ENCODE measurements at regions of chr20 and their contacts with region 1.

Region 1: DNA sequence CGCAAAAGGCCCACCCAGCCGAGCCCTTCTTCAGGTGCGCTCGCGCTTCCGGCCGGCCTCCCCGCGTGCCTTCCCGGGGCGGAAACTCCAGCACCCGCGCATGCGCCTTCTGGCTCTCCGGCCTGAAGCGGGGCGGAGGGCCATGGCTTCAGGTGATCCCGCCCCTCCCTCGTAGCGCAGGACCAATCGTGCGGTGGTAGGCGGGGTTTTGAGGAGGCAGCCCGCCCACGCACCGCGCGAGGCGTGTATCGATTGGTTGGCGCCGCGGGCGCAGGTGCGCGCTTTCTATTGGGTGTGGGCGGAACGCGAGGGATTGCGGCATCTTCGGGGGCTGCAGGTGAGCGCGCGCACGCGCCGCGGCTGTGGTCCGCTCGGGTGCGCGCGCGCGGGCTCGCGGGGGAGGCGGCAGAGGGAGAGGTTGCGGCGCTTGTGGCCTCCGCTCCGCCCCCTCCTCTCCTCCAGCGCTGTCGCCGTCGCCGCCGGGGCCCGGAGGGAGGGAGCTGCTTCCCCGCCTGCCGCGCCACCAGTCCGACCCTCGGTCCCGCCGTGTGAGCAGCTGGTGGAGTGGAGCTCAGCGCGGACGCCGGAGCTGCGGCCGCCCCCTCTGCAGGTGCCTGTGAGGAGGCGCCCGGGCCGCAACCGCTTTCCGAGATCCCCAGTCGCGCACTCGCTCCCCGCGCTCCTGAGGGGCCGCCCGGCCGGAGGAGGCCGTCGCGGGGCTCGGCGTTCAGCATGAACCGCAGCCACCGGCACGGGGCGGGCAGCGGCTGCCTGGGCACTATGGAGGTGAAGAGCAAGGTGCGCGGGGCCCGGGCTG is at the start of gene PARD6B:
- DNase-seq: peak; percentile 98 to 99
- H3K4me3 ChIP-seq: peak within 1 kb of the TSS; percentile 80 to 96 (median 92)
- H3K27ac ChIP-seq: peak within 1 kb of the TSS; percentile 72
- H3K4me1 ChIP-seq: peaks cover 2 to 9% (median 6%) of the 10 kb centered on the region in 4 experiments; a peak in 5 of 7 replicates
- H3K27me3 ChIP-seq: no peaks in the 10 kb centered on the region
- CTCF ChIP-seq: no peak
- EP300 ChIP-seq: peak in 1 of 2 experiments; percentile 46; a peak in 1 of 3 replicates
- POLR2A ChIP-seq: peak; percentile 40 to 66
- RAD21 ChIP-seq: no peak; a peak in 1 of 4 replicates
- total RNA-seq, gene PARD6B: 27.3 and 34.1 TPM in 2 replicates

Region 2: DNA sequence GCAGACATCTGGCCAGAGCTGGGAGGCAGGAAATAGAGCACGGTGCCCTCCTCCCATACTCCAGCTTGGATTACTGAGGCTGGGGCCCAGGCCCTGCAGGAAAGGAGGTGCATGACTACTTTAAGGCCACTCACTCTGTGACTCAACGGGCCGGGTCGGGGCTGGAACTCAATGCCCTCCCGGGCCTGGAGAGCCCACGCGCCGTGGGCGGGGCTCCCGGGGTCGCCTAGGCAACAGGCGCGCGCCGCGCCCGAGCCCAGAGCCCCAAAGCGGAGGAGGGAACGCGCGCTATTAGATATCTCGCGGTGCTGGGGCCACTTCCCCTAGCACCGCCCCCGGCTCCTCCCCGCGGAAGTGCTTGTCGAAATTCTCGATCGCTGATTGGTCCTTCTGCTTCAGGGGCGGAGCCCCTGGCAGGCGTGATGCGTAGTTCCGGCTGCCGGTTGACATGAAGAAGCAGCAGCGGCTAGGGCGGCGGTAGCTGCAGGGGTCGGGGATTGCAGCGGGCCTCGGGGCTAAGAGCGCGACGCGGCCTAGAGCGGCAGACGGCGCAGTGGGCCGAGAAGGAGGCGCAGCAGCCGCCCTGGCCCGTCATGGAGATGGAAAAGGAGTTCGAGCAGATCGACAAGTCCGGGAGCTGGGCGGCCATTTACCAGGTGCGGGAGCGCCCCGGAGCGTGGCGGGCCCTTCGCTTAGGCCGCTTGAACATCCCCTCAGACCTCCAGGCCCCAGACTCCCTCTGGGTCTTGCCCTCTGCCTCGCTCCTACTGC is 221.1 kb before region 1 on chr20 and contains the start of gene PTPN1:
- CTCF ChIA-PET with region 1: no interaction called
- POLR2A ChIA-PET with region 1: no interaction called
- DNase-seq: peak; percentile 95 to 97
- H3K4me3 ChIP-seq: peak within 1 kb of the TSS; percentile 81 to 96 (median 89)
- H3K27ac ChIP-seq: peak within 1 kb of the TSS; percentile 62
- H3K4me1 ChIP-seq: peaks cover 3 to 7% (median 5%) of the 10 kb centered on the region in 4 experiments
- H3K27me3 ChIP-seq: no peaks in the 10 kb centered on the region
- CTCF ChIP-seq: no peak
- EP300 ChIP-seq: no peak
- POLR2A ChIP-seq: peak; percentile 23 to 94
- RAD21 ChIP-seq: no peak
- total RNA-seq, gene PTPN1: 30.8 and 32.1 TPM in 2 replicates

Region 3: DNA sequence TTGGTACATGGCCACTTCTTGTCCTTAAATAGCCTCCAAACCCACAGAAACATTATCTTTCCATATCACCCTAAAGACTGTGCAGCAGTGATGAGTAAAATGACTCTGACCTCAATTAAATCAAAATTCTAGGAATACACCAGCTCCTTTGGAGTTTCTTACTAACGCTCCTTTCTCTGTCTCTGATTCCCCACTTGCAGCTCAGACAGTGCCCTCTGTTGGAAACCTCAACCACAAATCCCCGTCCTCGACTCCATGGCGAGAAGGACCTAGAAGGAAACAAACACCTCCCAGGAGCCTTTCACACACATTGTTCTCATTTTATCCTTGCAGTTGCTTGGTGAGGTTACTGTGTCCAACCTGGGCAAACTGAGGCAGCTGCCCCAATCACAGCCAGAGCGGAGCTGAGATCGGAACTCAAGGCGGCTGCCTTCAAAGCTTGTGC is 17.6 kb before region 1 on chr20:
- CTCF ChIA-PET with region 1: interaction called, 11 read pairs
- POLR2A ChIA-PET with region 1: interaction called, 5 read pairs
- DNase-seq: peak in 1 of 2 experiments; percentile 56
- H3K4me3 ChIP-seq: no peak overlapping the region
- H3K27ac ChIP-seq: no peak overlapping the region
- H3K4me1 ChIP-seq: peaks cover 0 to 3% (median 2%) of the 10 kb centered on the region in 4 experiments; a peak in 1 of 7 replicates
- H3K27me3 ChIP-seq: no peaks in the 10 kb centered on the region
- CTCF ChIP-seq: peak; percentile 46 to 68 (median 66)
- EP300 ChIP-seq: no peak
- POLR2A ChIP-seq: no peak
- RAD21 ChIP-seq: peak; percentile 65 to 76

Region 4: DNA sequence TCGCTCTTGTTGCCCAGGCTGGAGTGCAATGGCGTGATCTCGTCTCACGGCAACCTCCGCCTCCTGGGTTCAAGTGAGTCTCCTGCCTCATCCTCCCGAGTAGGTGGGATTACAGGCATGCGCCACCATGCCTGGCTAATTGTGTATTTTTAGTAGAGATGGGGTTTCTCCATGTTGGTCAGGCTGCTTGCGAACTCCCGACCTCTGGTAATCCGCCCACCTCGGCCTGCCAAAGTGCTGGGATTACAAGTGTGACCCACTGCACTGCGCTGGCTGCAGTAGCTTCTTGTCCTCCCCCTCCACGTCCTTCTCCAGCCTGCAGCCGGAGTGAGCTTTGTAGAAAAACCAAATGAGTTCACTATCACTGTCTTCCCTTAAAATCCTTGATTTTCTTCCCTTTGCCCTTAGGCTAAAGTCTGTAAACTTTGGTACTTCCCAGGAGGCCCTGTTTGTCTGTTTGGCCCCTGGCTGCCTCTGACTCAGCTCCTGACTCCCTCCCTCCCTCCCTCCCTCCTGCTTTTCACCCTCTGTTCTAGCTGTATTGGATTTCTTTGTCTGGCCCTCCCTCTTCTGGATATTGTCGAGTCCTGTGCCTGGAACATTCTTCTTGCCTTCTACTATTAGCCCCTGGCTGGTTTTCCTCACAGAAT is 13.0 kb after region 1 on chr20:
- CTCF ChIA-PET with region 1: interaction called, 27 read pairs
- POLR2A ChIA-PET with region 1: interaction called, 6 read pairs
- DNase-seq: peak in 1 of 2 experiments; percentile 46
- H3K4me3 ChIP-seq: no peak overlapping the region
- H3K27ac ChIP-seq: 0 out of 2 replicates have a peak overlapping the region, but pooled peaks have one; percentile 45
- H3K4me1 ChIP-seq: peaks cover 2 to 8% (median 5%) of the 10 kb centered on the region in 4 experiments; a peak in 4 of 7 replicates
- H3K27me3 ChIP-seq: no peaks in the 10 kb centered on the region
- CTCF ChIP-seq: 0 out of 4 replicates have a peak, but pooled peaks of 1 of the 3 experiments have one; percentile 9
- EP300 ChIP-seq: no peak
- POLR2A ChIP-seq: no peak
- RAD21 ChIP-seq: peak; percentile 23 to 45; a peak in 2 of 4 replicates

Measured in H1 (cell line).